IMR-90 (cell line): ENCODE measurements at regions of chr12 and their contacts with region 1.

Region 1: DNA sequence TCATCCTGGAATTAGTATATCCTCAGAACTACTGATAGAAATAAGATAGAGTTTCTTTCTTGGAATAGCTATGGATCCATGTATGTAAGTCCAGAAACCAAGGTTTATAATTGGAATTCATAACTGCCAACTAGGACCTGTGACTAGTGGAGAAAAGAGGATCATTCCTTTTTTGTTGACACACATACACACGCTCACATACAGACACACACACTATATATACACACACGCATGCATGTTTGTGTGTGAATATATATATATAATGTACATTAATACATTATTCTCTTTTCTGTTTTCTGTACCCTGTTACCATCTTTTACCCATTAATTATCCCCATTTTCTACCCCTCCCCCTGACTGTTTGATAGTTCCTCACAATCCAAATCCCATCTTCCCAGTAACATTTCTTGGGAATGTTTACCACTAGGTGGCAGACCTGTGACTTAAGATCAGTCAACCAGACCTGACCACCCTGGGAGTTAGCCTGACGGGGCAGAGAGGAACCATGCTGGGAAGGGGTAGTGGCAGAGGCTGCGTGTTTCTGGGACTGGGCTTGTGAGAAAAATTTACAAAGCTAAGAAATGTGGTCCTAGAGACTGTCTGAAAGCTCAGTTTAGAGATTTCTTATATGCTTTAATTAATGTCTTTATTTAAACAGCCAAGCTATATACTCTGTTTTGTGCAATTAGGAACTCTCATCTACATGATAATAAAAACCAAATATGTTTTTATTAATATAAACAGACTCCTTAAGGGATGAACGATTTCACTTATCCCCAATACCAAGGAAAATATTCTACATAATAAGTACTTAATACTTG is 308.0 kb downstream of the PPFIA2 start:
- DNase-seq: peak; percentile 54
- ATAC-seq: peak; percentile 87
- H3K4me3 ChIP-seq: no peak overlapping the region
- H3K27ac ChIP-seq: no peak overlapping the region
- H3K4me1 ChIP-seq: no peaks in the 10 kb centered on the region
- H3K27me3 ChIP-seq: no peaks in the 10 kb centered on the region
- CTCF ChIP-seq: peak; percentile 49
- POLR2A ChIP-seq: no peak
- RAD21 ChIP-seq: peak; percentile 34

Region 2: GRCh38 chr12:81573228-81573627 is 122.1 kb after region 1 on chr12:
- CTCF ChIA-PET with region 1: no interaction called
- POLR2A ChIA-PET with region 1: no interaction called
- dilution Hi-C with region 1: no loop called
- in situ Hi-C with region 1: no loop called
- intact Hi-C with region 1: no loop called
- DNase-seq: peak; percentile 2
- ATAC-seq: peak; percentile 67
- H3K4me3 ChIP-seq: no peak overlapping the region
- H3K27ac ChIP-seq: no peak overlapping the region
- H3K4me1 ChIP-seq: no peaks in the 10 kb centered on the region
- H3K27me3 ChIP-seq: no peaks in the 10 kb centered on the region
- CTCF ChIP-seq: no peak
- POLR2A ChIP-seq: no peak
- RAD21 ChIP-seq: no peak

Region 3: GRCh38 chr12:81627336-81628189 is 176.4 kb after region 1 on chr12:
- CTCF ChIA-PET with region 1: interaction called, 3 read pairs
- POLR2A ChIA-PET with region 1: no interaction called
- dilution Hi-C with region 1: no loop called
- in situ Hi-C with region 1: loop called (anchors 10 kb)
- intact Hi-C with region 1: loop called (anchors 1 kb)
- DNase-seq: peak; percentile 36
- ATAC-seq: no peak
- H3K4me3 ChIP-seq: no peak overlapping the region
- H3K27ac ChIP-seq: no peak overlapping the region
- H3K4me1 ChIP-seq: no peaks in the 10 kb centered on the region
- H3K27me3 ChIP-seq: no peaks in the 10 kb centered on the region
- CTCF ChIP-seq: peak; percentile 55
- POLR2A ChIP-seq: no peak
- RAD21 ChIP-seq: peak; percentile 41; the same call in 1 of the 2 replicates

Region 4: DNA sequence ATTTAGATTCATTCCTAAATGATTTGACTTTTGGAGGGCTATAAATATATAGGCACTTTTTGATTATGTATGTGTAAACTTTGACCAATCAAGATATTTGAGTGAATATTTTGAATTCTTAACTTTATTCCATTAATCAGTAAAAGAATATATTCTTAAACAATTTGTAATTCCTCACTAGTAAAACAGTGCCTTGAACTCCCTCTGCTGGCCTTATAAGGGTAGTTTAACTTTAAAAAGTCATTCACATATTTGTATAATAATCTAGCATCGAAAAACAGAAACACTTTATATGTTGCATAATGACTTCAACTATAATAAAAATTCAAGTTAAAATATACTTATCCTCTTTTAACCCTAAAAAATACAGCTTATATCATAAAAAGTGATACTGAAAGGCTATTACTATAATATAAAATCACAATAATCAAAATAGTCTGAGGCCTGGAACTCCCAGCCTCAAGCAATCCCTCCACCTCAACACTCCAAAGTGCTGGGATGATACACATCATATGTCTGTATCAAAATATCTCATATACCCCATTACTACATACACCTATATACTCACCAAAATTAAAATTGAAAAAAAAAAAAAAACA is 875.9 kb after region 1 on chr12:
- CTCF ChIA-PET with region 1: no interaction called
- POLR2A ChIA-PET with region 1: no interaction called
- dilution Hi-C with region 1: no loop called
- in situ Hi-C with region 1: no loop called
- intact Hi-C with region 1: loop called (anchors 5 kb)
- DNase-seq: peak; percentile 28
- ATAC-seq: peak; percentile 63
- H3K4me3 ChIP-seq: no peak overlapping the region
- H3K27ac ChIP-seq: no peak overlapping the region
- H3K4me1 ChIP-seq: no peaks in the 10 kb centered on the region
- H3K27me3 ChIP-seq: no peaks in the 10 kb centered on the region
- CTCF ChIP-seq: peak; percentile 52
- POLR2A ChIP-seq: no peak
- RAD21 ChIP-seq: peak; percentile 36; the same call in 1 of the 2 replicates